ENCODE measurements at regions of chr6 and their contacts with region 1.

Region 1: DNA sequence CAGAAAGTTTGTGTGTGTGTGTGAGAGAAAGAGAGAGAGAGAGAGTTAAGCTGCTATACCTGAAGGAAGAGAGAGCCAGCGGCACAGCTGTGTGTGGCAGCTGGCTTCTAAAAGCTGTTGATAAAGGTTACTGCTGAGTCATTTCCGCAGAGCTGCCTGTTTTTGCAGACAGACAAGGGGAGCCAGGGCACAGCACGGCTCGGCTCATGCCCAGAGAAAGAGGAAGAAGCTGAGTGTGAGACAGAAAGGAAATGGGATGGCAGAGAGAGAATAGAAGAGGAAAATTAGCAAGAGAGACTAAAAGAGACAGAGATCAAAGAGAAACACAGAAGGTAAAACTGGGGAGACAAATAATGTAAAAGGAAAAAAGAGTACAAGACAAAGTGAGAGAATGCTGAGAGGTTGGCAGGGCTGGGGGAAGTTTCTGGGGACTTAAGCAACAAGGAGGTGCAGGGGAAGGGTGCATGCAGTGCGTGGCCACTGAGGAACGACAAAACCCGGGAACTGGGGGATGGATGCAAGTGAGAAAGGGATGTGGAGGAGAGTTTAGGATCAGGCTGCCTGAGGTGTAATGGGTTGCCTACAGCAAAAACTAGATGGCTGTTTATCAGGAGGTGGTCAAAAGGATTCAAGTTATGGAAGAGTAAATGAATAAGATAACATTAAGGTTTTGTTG is 22.7 kb downstream of the HLA-A start:
- DNase-seq: peak; percentile 88
- ATAC-seq: peak; percentile 93
- H3K4me3 Mint-ChIP-seq: peak overlapping the region; percentile 84
- H3K27ac Mint-ChIP-seq: peak overlapping the region; percentile 97
- H3K4me1 Mint-ChIP-seq: peaks cover 42% of the 10 kb centered on the region
- H3K27me3 Mint-ChIP-seq: no peaks in the 10 kb centered on the region

Region 2: GRCh38 chr6:28807682-28808280 is 1157.2 kb before region 1 on chr6:
- CTCF ChIA-PET with region 1: no interaction called
- POLR2A ChIA-PET with region 1: interaction called, 14 read pairs
- intact Hi-C with region 1: no loop called
- DNase-seq: peak; percentile 60
- ATAC-seq: peak; percentile 51
- H3K4me3 Mint-ChIP-seq: peak overlapping the region; percentile 18
- H3K27ac Mint-ChIP-seq: no peak overlapping the region
- H3K4me1 Mint-ChIP-seq: peaks cover 5% of the 10 kb centered on the region
- H3K27me3 Mint-ChIP-seq: peaks cover 75% of the 10 kb centered on the region

Region 3: GRCh38 chr6:29752451-29753308 is 212.3 kb before region 1 on chr6:
- CTCF ChIA-PET with region 1: interaction called, 3 read pairs
- POLR2A ChIA-PET with region 1: no interaction called
- intact Hi-C with region 1: loop called in 1 of 2 experiments (anchors 1 kb)
- DNase-seq: peak; percentile 93
- ATAC-seq: peak; percentile 80
- H3K4me3 Mint-ChIP-seq: peak overlapping the region; percentile 83
- H3K27ac Mint-ChIP-seq: peak overlapping the region; percentile 89
- H3K4me1 Mint-ChIP-seq: peaks cover 23% of the 10 kb centered on the region
- H3K27me3 Mint-ChIP-seq: no peaks in the 10 kb centered on the region

Region 4: GRCh38 chr6:29813809-29814208 is 151.2 kb before region 1 on chr6:
- CTCF ChIA-PET with region 1: no interaction called
- POLR2A ChIA-PET with region 1: no interaction called
- intact Hi-C with region 1: no loop called
- DNase-seq: no peak
- ATAC-seq: no peak
- H3K4me3 Mint-ChIP-seq: no peak overlapping the region
- H3K27ac Mint-ChIP-seq: no peak overlapping the region
- H3K4me1 Mint-ChIP-seq: peaks cover 8% of the 10 kb centered on the region
- H3K27me3 Mint-ChIP-seq: peaks cover 11% of the 10 kb centered on the region

Region 5: GRCh38 chr6:29887819-29888776 is 76.9 kb before region 1 on chr6:
- CTCF ChIA-PET with region 1: interaction called, 4 read pairs
- POLR2A ChIA-PET with region 1: no interaction called
- intact Hi-C with region 1: loop called in 1 of 2 experiments (anchors 5 kb)
- DNase-seq: peak; percentile 90
- ATAC-seq: peak; percentile 77
- H3K4me3 Mint-ChIP-seq: peak overlapping the region; percentile 77
- H3K27ac Mint-ChIP-seq: peak overlapping the region; percentile 80
- H3K4me1 Mint-ChIP-seq: peaks cover 16% of the 10 kb centered on the region
- H3K27me3 Mint-ChIP-seq: no peaks in the 10 kb centered on the region

Region 6: GRCh38 chr6:29948277-29948676 is 16.7 kb before region 1 on chr6:
- CTCF ChIA-PET with region 1: interaction called, 4 read pairs
- POLR2A ChIA-PET with region 1: interaction called, 5 read pairs
- intact Hi-C with region 1: loop called in 1 of 2 experiments (anchors 1 kb)
- DNase-seq: no peak
- ATAC-seq: no peak
- H3K4me3 Mint-ChIP-seq: no peak overlapping the region
- H3K27ac Mint-ChIP-seq: peak overlapping the region; percentile 11
- H3K4me1 Mint-ChIP-seq: peaks cover 38% of the 10 kb centered on the region
- H3K27me3 Mint-ChIP-seq: no peaks in the 10 kb centered on the region

Region 7: GRCh38 chr6:29995340-29995777 is 30.3 kb after region 1 on chr6:
- CTCF ChIA-PET with region 1: no interaction called
- POLR2A ChIA-PET with region 1: no interaction called
- intact Hi-C with region 1: no loop called
- DNase-seq: no peak
- ATAC-seq: peak; percentile 44
- H3K4me3 Mint-ChIP-seq: no peak overlapping the region
- H3K27ac Mint-ChIP-seq: no peak overlapping the region
- H3K4me1 Mint-ChIP-seq: no peaks in the 10 kb centered on the region
- H3K27me3 Mint-ChIP-seq: no peaks in the 10 kb centered on the region